ENCODE measurements at regions of chr2 and their contacts with region 1.

Region 1: DNA sequence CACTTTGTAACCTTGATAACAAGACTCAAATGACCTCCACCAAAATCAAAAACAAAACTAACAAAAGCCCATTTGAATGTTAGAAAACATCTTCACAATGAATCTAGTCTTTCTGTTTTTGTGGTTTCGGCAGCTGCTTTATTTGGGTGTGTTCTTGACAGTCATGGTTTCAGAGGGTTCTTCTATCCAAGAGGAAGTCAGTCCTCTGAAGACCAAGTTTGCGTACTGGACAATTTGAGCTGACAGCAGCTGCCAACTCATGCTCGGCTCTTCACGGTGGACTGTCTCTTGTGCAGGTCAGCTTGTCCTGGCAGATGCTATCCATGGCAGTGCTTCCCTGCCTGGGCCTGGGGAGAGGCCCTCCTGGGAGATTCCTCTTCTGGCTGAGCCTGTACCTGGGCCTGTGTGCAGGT is 91.0 kb downstream of the TMEM17 start:
- DNase-seq: no peak
- ATAC-seq: no peak
- H3K4me3 ChIP-seq: no peak overlapping the region
- H3K27ac ChIP-seq: no peak overlapping the region
- H3K4me1 ChIP-seq: no peaks in the 10 kb centered on the region
- H3K27me3 ChIP-seq: no peaks in the 10 kb centered on the region

Region 2: DNA sequence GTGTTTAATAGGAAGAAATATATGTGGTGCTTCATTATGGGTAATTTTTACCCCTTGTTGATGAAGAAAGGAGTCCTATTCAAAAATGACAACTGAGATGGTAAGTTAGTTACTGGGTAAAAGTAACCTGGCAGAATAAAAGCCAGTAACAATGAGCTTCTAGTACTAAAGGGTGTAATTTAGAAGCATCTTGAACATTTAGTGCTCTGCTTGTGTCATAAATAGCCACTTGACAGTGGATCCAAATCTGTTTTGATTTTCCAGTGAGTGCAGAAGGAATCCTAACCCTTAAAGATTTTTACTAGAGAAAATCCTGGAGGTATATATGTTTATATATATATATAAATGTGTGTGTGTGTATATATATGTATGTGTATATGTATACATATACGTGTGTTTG is 494.5 kb before region 1 on chr2:
- intact Hi-C with region 1: loop called in 1 of 2 experiments (anchors 2 kb)
- DNase-seq: no peak
- ATAC-seq: no peak
- H3K4me3 ChIP-seq: no peak overlapping the region
- H3K27ac ChIP-seq: no peak overlapping the region
- H3K4me1 ChIP-seq: peaks cover 0 to 4% of the 10 kb centered on the region in 2 donors
- H3K27me3 ChIP-seq: no peaks in the 10 kb centered on the region

Region 3: DNA sequence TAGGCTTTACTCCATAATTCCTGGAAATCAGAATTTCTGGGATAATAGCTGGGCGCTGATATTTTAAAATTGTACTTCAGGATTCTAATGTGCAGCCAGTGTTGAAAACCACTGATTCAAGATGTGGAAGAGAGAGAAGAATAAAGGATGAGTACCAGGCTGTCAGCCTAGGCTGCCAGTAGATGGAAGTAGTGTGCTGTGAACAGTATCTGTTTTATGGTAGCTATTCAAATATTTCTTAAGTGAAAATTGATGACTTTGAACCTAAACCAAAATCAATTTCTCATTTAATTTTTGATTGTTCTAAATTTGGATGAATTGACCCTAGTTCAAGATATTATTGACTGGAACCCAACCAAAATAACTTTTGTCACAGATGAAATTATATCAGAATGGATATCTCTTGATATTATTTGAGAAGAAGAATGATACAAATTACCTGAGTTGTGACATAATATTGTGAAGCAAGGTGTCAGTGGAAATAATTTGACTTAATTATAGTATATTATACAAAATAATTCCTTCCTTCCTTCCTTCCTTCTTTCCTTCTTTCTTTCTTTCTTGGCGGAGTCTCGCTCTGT is 421.5 kb before region 1 on chr2:
- intact Hi-C with region 1: loop called (anchors 5 kb)
- DNase-seq: no peak
- ATAC-seq: no peak
- H3K4me3 ChIP-seq: no peak overlapping the region
- H3K27ac ChIP-seq: no peak overlapping the region
- H3K4me1 ChIP-seq: no peaks in the 10 kb centered on the region
- H3K27me3 ChIP-seq: no peaks in the 10 kb centered on the region

Measured in aorta (tissue), 5 donors.